ENCODE measurements at regions of chr14 and their contacts with region 1.

Region 1: DNA sequence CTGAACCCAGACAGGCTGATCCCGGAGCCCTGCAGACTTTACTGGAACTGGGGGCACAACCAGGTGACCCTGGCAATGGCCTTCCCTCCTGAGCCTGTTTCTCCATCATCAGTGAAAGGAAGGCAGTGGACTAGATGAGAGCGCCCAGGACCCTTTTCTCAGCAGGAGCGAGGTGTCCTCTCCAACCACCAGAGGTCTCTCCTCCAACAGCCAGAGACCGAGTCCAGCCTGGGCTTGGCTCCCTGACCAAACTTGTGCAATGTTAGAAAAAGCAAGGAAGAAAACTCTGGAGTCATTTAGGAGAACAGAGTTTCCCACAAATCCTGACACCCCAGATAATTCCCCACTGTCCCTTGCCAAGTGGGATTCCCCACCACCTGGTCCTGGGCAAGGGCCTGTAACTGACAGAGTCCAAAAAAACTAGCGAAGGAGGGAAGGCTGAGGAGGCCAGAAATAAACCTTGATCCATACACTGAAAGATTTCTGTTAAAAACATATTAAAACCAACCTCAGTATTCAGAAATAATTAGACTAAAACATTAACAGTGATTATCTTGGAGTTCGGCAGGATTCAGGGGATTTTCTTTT is 9.0 kb downstream of the RPS6KL1 start:
- DNase-seq: peak; percentile 12
- ATAC-seq: peak; percentile 82
- H3K4me3 ChIP-seq: no peak overlapping the region
- H3K27ac ChIP-seq: no peak overlapping the region
- H3K4me1 ChIP-seq: peaks cover 10 to 21% of the 10 kb centered on the region in 2 experiments; a peak in 3 of 4 replicates
- H3K27me3 ChIP-seq: no peaks in the 10 kb centered on the region
- CTCF ChIP-seq: peak; percentile 68 to 85 (median 75); a peak in 5 of 6 replicates
- POLR2A ChIP-seq: no peak
- RAD21 ChIP-seq: peak; percentile 82

Region 2: GRCh38 chr14:75088574-75089373 is 174.7 kb after region 1 on chr14:
- CTCF ChIA-PET with region 1: no interaction called
- POLR2A ChIA-PET with region 1: no interaction called
- RAD21 ChIA-PET with region 1: no interaction called
- intact Hi-C with region 1: loop called (anchors 1 kb)
- DNase-seq: peak; percentile 26
- ATAC-seq: peak; percentile 77
- H3K4me3 ChIP-seq: no peak overlapping the region
- H3K27ac ChIP-seq: no peak overlapping the region
- H3K4me1 ChIP-seq: no peaks in the 10 kb centered on the region
- H3K27me3 ChIP-seq: no peaks in the 10 kb centered on the region
- CTCF ChIP-seq: peak; percentile 79 to 85 (median 84)
- POLR2A ChIP-seq: no peak
- RAD21 ChIP-seq: peak; percentile 92